ENCODE measurements at regions of chr12 and their contacts with region 1.

Region 1: GRCh38 chr12:79358716-79359300 is 332.0 kb downstream of the PAWR start:
- DNase-seq: no peak
- H3K4me3 ChIP-seq: no peak overlapping the region
- H3K27ac ChIP-seq: no peak overlapping the region
- H3K4me1 ChIP-seq: no peaks in the 10 kb centered on the region
- H3K27me3 ChIP-seq: no peaks in the 10 kb centered on the region
- CTCF ChIP-seq: 0 out of 2 replicates have a peak, but pooled peaks have one; percentile 25

Region 2: GRCh38 chr12:78951803-78952538 is 406.8 kb before region 1 on chr12:
- CTCF ChIA-PET with region 1: no interaction called
- POLR2A ChIA-PET with region 1: interaction called, 10 read pairs
- intact Hi-C with region 1: no loop called
- DNase-seq: peak; percentile 60
- H3K4me3 ChIP-seq: peak overlapping the region; percentile 3
- H3K27ac ChIP-seq: peak overlapping the region; percentile 12
- H3K4me1 ChIP-seq: peaks cover 27% of the 10 kb centered on the region
- H3K27me3 ChIP-seq: no peaks in the 10 kb centered on the region
- CTCF ChIP-seq: no peak

Region 3: GRCh38 chr12:79597910-79598309 is 239.1 kb after region 1 on chr12:
- CTCF ChIA-PET with region 1: no interaction called
- POLR2A ChIA-PET with region 1: no interaction called
- intact Hi-C with region 1: no loop called
- DNase-seq: no peak
- H3K4me3 ChIP-seq: no peak overlapping the region
- H3K27ac ChIP-seq: no peak overlapping the region
- H3K4me1 ChIP-seq: no peaks in the 10 kb centered on the region
- H3K27me3 ChIP-seq: no peaks in the 10 kb centered on the region
- CTCF ChIP-seq: no peak

Measured in A673 (cell line).